HepG2 (cell line): ENCODE measurements at regions of chr15 and their contacts with region 1.

Region 1: GRCh38 chr15:89472785-89473256 is 23.6 kb downstream of the RHCG start:
- DNase-seq: peak; percentile 56
- ATAC-seq: peak; percentile 96
- H3K4me3 ChIP-seq: no peak overlapping the region
- H3K27ac ChIP-seq: no peak overlapping the region
- H3K4me1 ChIP-seq: no peaks in the 10 kb centered on the region
- H3K27me3 ChIP-seq: peaks cover 0 to 2% of the 10 kb centered on the region in 2 experiments; a peak in 3 of 5 replicates
- CTCF ChIP-seq: peak; percentile 98
- EP300 ChIP-seq: no peak
- POLR2A ChIP-seq: no peak
- RAD21 ChIP-seq: peak; percentile 94

Region 2: GRCh38 chr15:89358755-89359439 is 113.9 kb before region 1 on chr15:
- CTCF ChIA-PET with region 1: interaction called, 22 read pairs
- POLR2A ChIA-PET with region 1: no interaction called
- in situ Hi-C with region 1: loop called (anchors 5 kb)
- intact Hi-C with region 1: loop called (anchors 2 kb)
- DNase-seq: peak; percentile 41
- ATAC-seq: peak; percentile 87
- H3K4me3 ChIP-seq: peak overlapping the region; percentile 38 to 72 (median 46); a peak in 4 of 6 replicates
- H3K27ac ChIP-seq: no peak overlapping the region
- H3K4me1 ChIP-seq: peaks cover 7% of the 10 kb centered on the region
- H3K27me3 ChIP-seq: peaks cover 6 to 74% of the 10 kb centered on the region in 2 experiments
- CTCF ChIP-seq: peak; percentile 97
- EP300 ChIP-seq: no peak
- POLR2A ChIP-seq: no peak
- RAD21 ChIP-seq: peak; percentile 91

Region 3: DNA sequence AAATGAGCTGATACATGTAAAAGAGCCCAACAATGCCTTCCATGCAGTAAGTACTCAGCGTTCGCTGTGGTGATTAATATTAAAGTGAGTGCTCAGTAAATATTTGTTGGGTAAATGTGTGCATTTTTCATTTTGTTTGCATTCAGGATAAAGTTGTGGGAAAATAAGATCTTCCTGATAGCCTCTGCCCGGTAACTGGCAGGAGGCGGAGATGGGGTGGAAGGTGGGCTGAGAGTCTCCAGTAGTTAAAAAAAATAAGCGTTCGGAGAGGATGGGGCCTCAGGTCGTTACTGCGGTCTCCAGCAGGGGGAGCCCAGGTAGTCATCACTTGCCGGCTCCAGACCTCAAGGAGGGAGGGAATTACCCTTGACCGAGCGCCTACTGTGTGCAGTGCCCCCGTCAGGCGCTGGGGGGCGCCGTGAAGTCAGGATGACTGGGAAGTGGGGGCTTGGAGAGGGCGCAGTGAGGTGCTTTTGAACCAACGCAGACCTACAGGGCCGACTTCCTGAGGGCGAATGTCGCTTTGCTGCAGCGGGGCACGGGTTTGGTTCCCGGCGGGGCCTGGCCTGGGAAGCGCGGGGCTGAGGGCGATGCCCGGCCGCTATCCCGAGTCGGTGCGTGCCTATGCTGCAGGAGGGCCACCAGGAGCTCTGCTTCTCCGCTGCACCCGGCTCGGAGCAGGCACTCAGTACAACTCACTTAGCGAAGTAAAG is 56.5 kb before region 1 on chr15:
- CTCF ChIA-PET with region 1: interaction called, 12 read pairs
- POLR2A ChIA-PET with region 1: no interaction called
- in situ Hi-C with region 1: no loop called
- intact Hi-C with region 1: no loop called
- DNase-seq: peak; percentile 66
- ATAC-seq: peak; percentile 82
- H3K4me3 ChIP-seq: no peak overlapping the region
- H3K27ac ChIP-seq: no peak overlapping the region
- H3K4me1 ChIP-seq: no peaks in the 10 kb centered on the region
- H3K27me3 ChIP-seq: peaks cover 2 to 30% of the 10 kb centered on the region in 2 experiments; a peak in 4 of 5 replicates
- CTCF ChIP-seq: peak; percentile 86
- EP300 ChIP-seq: no peak
- POLR2A ChIP-seq: no peak
- RAD21 ChIP-seq: peak; percentile 61

Region 4: DNA sequence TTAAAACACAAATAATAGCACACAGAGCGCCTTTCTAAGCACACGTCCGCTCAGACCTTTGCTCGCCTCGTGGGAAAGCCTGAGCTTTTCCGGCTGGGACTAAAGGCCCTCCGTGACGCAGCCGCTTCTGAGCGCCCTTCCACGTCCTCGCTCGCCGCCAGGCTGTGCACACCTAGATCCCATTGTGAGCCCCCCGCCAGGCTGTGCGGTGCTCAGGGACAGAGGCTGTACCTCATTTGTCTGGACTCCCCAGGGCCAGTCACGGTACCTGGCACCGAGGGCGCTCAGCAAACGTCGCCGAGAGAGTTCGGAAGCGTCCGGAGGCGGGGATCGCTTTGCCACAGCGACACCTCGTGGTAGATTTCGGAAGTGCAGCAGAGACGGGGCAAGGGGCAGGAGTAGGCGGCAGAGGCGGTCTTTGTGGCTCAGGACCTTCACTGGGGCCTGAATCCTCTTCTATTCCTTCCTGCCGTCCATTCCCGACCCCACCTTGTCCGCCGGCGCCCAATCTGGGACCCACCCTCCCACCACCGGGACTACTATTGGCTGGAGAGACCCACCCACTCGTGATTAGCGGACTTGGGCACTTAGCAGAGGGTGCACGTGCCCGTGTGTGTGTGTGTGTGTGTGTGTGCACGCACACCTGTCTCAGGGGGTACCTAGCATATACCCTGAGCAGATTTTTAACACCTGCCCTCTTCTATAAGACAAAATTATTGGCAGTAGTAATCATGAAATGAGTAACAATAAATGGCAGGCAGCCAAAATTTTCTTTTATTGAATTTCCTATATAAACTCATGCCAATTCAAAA is 42.1 kb before region 1 on chr15:
- CTCF ChIA-PET with region 1: no interaction called
- POLR2A ChIA-PET with region 1: no interaction called
- in situ Hi-C with region 1: no loop called
- intact Hi-C with region 1: no loop called
- DNase-seq: peak; percentile 49
- ATAC-seq: peak; percentile 96
- H3K4me3 ChIP-seq: peak overlapping the region; percentile 32 to 73 (median 49); a peak in 5 of 6 replicates
- H3K27ac ChIP-seq: no peak overlapping the region
- H3K4me1 ChIP-seq: peaks cover 8% of the 10 kb centered on the region; the same call in 1 of the 2 replicates
- H3K27me3 ChIP-seq: peaks cover 0 to 16% of the 10 kb centered on the region in 2 experiments; a peak in 1 of 5 replicates
- CTCF ChIP-seq: peak; percentile 99
- EP300 ChIP-seq: no peak
- POLR2A ChIP-seq: no peak
- RAD21 ChIP-seq: peak; percentile 88

Region 5: DNA sequence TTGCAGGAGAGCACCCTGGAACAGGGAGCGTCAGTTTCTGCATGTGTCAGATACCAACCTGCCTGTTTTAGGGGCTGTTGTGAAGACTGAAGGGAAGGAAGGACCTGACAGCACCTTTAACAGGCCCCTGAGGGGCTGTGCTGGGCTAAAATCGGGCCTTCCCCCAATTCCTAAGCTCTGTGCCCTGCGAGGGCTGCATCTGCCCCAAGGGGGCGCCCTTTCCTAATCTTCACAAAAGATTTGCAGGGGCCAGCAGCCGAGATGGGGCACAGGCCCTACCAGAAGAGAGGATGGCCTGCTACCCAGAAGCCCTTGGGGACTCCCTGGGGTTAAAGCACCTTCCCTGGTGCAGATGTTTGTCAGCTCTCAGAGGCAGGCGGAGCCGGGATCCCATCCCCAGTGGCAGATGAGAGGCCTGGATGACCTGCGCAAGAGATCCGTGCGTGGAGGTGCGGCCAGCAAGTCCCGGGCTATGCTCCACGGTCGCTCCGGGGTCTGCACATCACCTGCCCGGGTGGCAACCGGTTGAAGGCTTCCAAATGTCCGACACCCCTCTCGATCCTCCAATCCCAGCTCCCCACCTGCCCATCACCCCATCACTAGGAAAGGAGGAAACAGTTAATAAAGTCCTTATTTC is 30.0 kb before region 1 on chr15:
- CTCF ChIA-PET with region 1: interaction called, 34 read pairs
- POLR2A ChIA-PET with region 1: interaction called, 4 read pairs
- in situ Hi-C with region 1: no loop called
- intact Hi-C with region 1: loop called (anchors 1 kb)
- DNase-seq: peak; percentile 31
- ATAC-seq: peak; percentile 87
- H3K4me3 ChIP-seq: no peak overlapping the region
- H3K27ac ChIP-seq: no peak overlapping the region
- H3K4me1 ChIP-seq: no peaks in the 10 kb centered on the region
- H3K27me3 ChIP-seq: peaks cover 4 to 34% of the 10 kb centered on the region in 2 experiments; a peak in 3 of 5 replicates
- CTCF ChIP-seq: peak; percentile 87
- EP300 ChIP-seq: no peak
- POLR2A ChIP-seq: no peak
- RAD21 ChIP-seq: peak; percentile 76